BJ (cell line): ENCODE measurements at regions of chr15 and their contacts with region 1.

Region 1: GRCh38 chr15:68672781-68673205 is 94.0 kb downstream of the CORO2B start:
- DNase-seq: no peak
- H3K4me3 ChIP-seq: no peak overlapping the region
- H3K27me3 ChIP-seq: no peaks in the 10 kb centered on the region
- CTCF ChIP-seq: peak; percentile 39

Region 2: GRCh38 chr15:68304589-68305337 is 368.0 kb before region 1 on chr15:
- CTCF ChIA-PET with region 1: interaction called, 18 read pairs
- POLR2A ChIA-PET with region 1: no interaction called
- DNase-seq: no peak
- H3K4me3 ChIP-seq: no peak overlapping the region
- H3K27me3 ChIP-seq: no peaks in the 10 kb centered on the region
- CTCF ChIP-seq: no peak

Region 3: DNA sequence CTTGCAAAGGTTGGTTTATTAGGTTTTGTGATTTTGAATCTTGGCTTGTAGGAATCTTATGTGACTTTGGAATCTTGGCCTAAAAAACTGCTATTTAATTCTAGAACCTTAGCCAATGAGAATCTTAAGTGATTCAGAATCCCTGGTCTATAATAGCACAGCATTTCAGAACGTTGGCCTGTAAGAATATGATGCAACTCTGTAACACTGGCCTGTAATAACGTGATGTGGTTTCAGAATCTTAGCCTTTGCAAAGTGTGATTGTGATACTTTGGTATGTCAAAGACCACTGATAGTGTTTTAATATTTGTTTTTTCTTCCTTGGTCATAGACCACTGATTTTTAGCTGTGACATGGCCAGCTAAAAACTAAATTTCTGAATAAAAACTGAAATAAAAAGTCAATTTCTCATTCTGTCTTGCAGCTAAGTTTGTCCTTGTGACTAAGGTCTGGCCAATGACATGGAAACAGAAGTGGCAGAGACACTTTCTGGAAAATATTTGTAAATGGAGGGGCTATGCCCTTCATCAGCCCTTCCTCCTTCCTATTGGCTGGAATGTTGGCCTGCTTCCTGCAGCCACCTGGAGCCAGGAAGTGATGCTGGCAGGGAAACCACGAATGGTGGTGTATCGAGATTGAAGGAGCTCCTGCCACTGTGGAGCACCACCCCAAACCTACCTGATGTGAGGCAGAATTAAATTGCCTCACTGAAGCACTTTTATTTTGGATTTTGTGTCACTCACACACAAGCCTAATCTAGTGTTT is 136.3 kb before region 1 on chr15:
- CTCF ChIA-PET with region 1: no interaction called
- POLR2A ChIA-PET with region 1: no interaction called
- DNase-seq: peak; percentile 96
- H3K4me3 ChIP-seq: no peak overlapping the region
- H3K27me3 ChIP-seq: no peaks in the 10 kb centered on the region
- CTCF ChIP-seq: no peak

Region 4: GRCh38 chr15:68578174-68578979 is 94.4 kb before region 1 on chr15:
- CTCF ChIA-PET with region 1: interaction called, 15 read pairs
- POLR2A ChIA-PET with region 1: no interaction called
- DNase-seq: no peak
- H3K4me3 ChIP-seq: peak overlapping the region; percentile 50
- H3K27me3 ChIP-seq: peaks cover 8% of the 10 kb centered on the region
- CTCF ChIP-seq: peak; percentile 51

Region 5: GRCh38 chr15:68658151-68658550 is 14.6 kb before region 1 on chr15:
- CTCF ChIA-PET with region 1: interaction called, 50 read pairs
- POLR2A ChIA-PET with region 1: no interaction called
- DNase-seq: no peak
- H3K4me3 ChIP-seq: no peak overlapping the region
- H3K27me3 ChIP-seq: no peaks in the 10 kb centered on the region
- CTCF ChIP-seq: no peak

Region 6: GRCh38 chr15:68687136-68687735 is 14.4 kb after region 1 on chr15:
- CTCF ChIA-PET with region 1: interaction called, 12 read pairs
- POLR2A ChIA-PET with region 1: no interaction called
- DNase-seq: no peak
- H3K4me3 ChIP-seq: no peak overlapping the region
- H3K27me3 ChIP-seq: no peaks in the 10 kb centered on the region
- CTCF ChIP-seq: no peak

Region 7: GRCh38 chr15:68924866-68925560 is 252.2 kb after region 1 on chr15:
- CTCF ChIA-PET with region 1: interaction called, 10 read pairs
- POLR2A ChIA-PET with region 1: no interaction called
- DNase-seq: peak; percentile 13
- H3K4me3 ChIP-seq: no peak overlapping the region
- H3K27me3 ChIP-seq: peaks cover 6% of the 10 kb centered on the region
- CTCF ChIP-seq: peak; percentile 92